ENCODE measurements at regions of chr11 and their contacts with region 1.

Region 1: DNA sequence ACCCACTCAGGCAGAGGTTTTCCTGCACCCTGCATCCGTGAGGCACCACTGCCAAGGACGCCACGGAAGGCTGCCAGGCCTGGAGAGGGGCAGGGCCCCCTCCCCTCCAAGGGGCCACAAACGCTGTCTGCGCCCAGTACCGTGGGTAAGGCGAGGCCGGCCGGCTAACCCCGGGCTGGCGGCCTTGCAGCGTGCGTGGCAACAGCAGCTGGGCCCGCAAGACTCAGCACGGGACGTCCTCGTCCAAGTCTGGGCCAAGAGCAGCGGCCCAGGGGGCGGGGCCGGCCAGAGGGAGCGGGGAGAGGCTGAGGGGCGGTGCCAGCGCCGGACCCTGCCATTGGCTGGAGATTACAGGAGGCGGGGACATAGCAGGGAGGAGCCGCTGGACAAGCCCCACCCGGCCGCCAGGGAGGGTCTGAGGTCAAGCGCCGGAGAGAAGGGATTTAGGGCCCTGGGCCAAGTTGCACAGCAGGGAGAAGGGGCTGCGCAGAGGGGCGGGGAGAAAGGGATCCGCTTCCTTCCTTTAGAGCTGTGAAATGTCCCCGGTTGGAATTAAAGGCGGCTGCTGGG is 16.0 kb downstream of the SLC43A1 start:
- DNase-seq: peak; percentile 98

Region 2: DNA sequence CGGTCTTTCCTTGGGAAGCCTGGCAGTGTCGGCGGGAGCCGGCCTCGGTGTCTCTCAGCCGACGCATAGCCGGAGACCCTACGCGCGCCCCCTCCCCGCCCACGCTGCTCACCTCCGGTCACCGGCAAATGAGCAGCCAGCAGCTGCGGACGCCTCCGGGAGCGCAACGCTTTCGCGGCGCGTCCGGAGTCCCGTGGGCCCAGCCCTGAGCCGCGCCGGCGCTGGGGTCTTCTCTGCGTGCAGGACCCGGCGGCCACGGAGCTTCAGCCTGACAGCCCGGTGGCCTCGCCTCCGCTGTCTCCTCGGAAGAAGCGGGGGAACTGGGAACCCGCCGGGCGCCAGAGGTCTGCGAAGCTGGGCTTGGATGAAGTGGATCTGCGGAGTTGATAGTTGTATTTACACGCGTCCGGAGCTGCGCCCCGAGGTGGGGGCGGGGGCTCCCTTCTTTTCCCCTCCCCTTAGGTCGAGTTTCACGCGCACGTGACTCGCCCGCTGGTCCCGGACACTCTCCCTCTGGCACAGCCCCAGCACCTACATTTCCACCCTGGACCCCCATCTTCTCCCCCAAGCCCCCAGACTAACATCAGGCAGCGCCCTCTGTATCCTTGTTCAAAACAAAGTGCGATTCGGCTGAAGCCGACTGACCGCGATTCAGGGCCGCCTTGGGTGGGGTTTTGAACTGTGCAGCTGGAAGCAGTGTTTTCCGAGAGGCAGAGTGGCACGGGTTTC is 16.0 kb after region 1 on chr11 and contains the start of gene SLC43A1:
- CTCF ChIA-PET with region 1: no interaction called
- POLR2A ChIA-PET with region 1: interaction called, 29 read pairs
- DNase-seq: peak; percentile 55